Adrenal gland (tissue), 19 donors: ENCODE measurements at regions of chr13 and their contacts with region 1.

Region 1: DNA sequence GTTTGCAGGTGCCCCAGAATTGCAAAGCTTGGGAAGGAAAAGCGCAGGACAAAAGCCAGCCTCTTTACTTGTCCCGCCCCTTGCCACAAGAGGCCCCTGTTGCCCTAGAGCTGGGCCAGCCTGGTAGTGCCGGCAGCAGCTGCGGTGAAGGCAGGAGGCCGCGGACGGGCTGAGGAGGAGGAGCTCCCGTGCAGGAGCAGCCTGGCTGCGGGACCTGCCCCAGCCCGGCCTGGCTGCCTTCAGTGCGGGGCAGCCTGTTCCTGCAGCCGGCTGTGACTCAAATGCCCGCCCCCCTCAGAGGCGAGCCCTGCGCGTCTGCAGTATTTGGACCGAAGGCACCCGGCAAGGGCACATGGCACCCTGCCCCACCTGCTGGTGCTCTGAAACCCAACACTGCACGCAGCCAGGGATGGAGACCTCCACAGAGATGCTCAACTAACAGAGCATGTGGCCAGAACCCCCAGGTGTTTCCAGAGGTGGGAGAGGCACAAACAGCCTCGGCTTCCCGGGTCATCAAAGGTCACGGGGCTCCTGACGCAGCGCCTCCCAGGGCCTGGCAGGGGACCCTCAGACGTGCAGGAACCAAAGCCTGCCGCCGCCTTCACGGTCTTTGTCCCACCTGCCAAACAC is 29.7 kb downstream of the NAXD start:
- DNase-seq: peak; percentile 69 to 89 (median 82)
- H3K4me3 ChIP-seq: no peak overlapping the region
- H3K27ac ChIP-seq: no peak overlapping the region
- H3K4me1 ChIP-seq: peaks cover 13 to 29% of the 10 kb centered on the region in 2 donors
- H3K27me3 ChIP-seq: no peaks in the 10 kb centered on the region
- CTCF ChIP-seq: peak in 5 of 6 experiments; percentile 38 to 60 (median 54)
- POLR2A ChIP-seq: peak in 1 of 2 donors; percentile 35

Region 2: GRCh38 chr13:110471833-110472162 is 173.2 kb before region 1 on chr13:
- intact Hi-C with region 1: no loop called
- DNase-seq: peak; percentile 55 to 86 (median 67)
- H3K4me3 ChIP-seq: no peak overlapping the region
- H3K27ac ChIP-seq: peak overlapping the region in 2 of 5 donors; percentile 59 to 74
- H3K4me1 ChIP-seq: peaks cover 3 to 5% of the 10 kb centered on the region in 2 donors
- H3K27me3 ChIP-seq: no peaks in the 10 kb centered on the region
- CTCF ChIP-seq: no peak
- POLR2A ChIP-seq: no peak

Region 3: DNA sequence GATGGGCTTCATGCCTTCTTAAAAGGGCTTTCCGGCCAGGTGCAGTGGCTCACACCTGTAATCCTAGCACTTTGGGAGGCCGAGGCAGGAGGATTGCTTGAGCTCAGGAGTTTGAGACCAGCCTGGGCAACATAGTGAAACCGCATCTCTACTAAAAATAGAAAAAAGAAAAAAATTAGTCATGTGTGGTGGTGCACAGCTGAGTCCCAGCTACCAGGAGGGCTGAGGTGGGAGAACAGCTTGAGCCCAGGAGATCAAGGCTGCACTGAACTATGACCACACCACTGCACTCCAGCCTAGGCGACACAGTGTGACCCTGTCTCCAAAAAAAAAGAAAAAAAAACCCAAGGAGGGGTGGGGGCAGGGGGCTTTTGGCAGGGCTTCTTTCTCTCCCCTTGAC is 53.7 kb after region 1 on chr13:
- intact Hi-C with region 1: loop called (anchors 10 kb)
- DNase-seq: peak in 1 of 7 donors; percentile 18
- H3K4me3 ChIP-seq: no peak overlapping the region
- H3K27ac ChIP-seq: no peak overlapping the region
- H3K4me1 ChIP-seq: peaks cover 0 to 15% of the 10 kb centered on the region in 2 donors
- H3K27me3 ChIP-seq: no peaks in the 10 kb centered on the region
- CTCF ChIP-seq: no peak
- POLR2A ChIP-seq: no peak